B cell (primary cell): ENCODE measurements at regions of chr16 and their contacts with region 1.

Region 1: GRCh38 chr16:46607529-46607928 is 13.7 kb downstream of the SHCBP1 start:
- DNase-seq: peak; percentile 58
- ATAC-seq: peak; percentile 36
- H3K4me3 ChIP-seq: no peak overlapping the region
- H3K4me3 Mint-ChIP-seq: no peak overlapping the region
- H3K27ac ChIP-seq: no peak overlapping the region
- H3K27ac Mint-ChIP-seq: no peak overlapping the region
- H3K4me1 ChIP-seq: peaks cover 9% of the 10 kb centered on the region in 2 donors
- H3K4me1 Mint-ChIP-seq: no peaks in the 10 kb centered on the region
- H3K27me3 ChIP-seq: no peaks in the 10 kb centered on the region
- H3K27me3 Mint-ChIP-seq: no peaks in the 10 kb centered on the region
- CTCF ChIP-seq: peak; percentile 76

Region 2: DNA sequence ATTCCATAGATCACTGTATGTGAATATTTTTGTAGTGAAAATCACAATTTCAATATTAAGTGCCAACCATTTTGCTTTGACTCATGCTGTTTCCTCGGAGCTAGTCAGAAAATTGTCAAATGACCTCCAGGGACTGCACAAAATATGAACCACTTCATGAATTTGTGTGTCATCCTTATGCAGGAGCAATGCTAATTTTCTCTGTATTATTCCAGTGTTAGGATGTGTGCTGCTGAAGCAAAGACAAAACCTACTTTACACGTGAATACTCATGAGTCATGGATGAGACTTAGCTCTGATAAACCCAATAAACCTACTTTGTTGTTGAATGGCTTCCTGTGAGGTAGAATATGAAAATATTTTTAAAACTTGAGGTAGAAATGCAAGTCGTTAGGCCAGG is 51.6 kb before region 1 on chr16:
- CTCF ChIA-PET with region 1: interaction called, 92 read pairs
- POLR2A ChIA-PET with region 1: no interaction called
- intact Hi-C with region 1: loop called (anchors 1 kb)
- DNase-seq: no peak
- ATAC-seq: no peak
- H3K4me3 ChIP-seq: no peak overlapping the region
- H3K4me3 Mint-ChIP-seq: no peak overlapping the region
- H3K27ac ChIP-seq: no peak overlapping the region
- H3K27ac Mint-ChIP-seq: no peak overlapping the region
- H3K4me1 ChIP-seq: no peaks in the 10 kb centered on the region
- H3K4me1 Mint-ChIP-seq: peaks cover 2% of the 10 kb centered on the region
- H3K27me3 ChIP-seq: no peaks in the 10 kb centered on the region
- H3K27me3 Mint-ChIP-seq: peaks cover 20% of the 10 kb centered on the region
- CTCF ChIP-seq: no peak

Region 3: GRCh38 chr16:46591257-46591656 is 16.3 kb before region 1 on chr16:
- CTCF ChIA-PET with region 1: interaction called, 14 read pairs
- POLR2A ChIA-PET with region 1: no interaction called
- intact Hi-C with region 1: no loop called
- DNase-seq: no peak
- ATAC-seq: no peak
- H3K4me3 ChIP-seq: no peak overlapping the region
- H3K4me3 Mint-ChIP-seq: no peak overlapping the region
- H3K27ac ChIP-seq: no peak overlapping the region
- H3K27ac Mint-ChIP-seq: no peak overlapping the region
- H3K4me1 ChIP-seq: no peaks in the 10 kb centered on the region
- H3K4me1 Mint-ChIP-seq: no peaks in the 10 kb centered on the region
- H3K27me3 ChIP-seq: no peaks in the 10 kb centered on the region
- H3K27me3 Mint-ChIP-seq: no peaks in the 10 kb centered on the region
- CTCF ChIP-seq: no peak

Region 4: GRCh38 chr16:46853713-46854443 is 246.3 kb after region 1 on chr16:
- CTCF ChIA-PET with region 1: no interaction called
- POLR2A ChIA-PET with region 1: no interaction called
- intact Hi-C with region 1: no loop called
- DNase-seq: peak; percentile 74
- ATAC-seq: peak; percentile 69
- H3K4me3 ChIP-seq: no peak overlapping the region
- H3K4me3 Mint-ChIP-seq: no peak overlapping the region
- H3K27ac ChIP-seq: no peak overlapping the region
- H3K27ac Mint-ChIP-seq: peak overlapping the region; percentile 7
- H3K4me1 ChIP-seq: peaks cover 6 to 18% of the 10 kb centered on the region in 2 donors
- H3K4me1 Mint-ChIP-seq: peaks cover 17% of the 10 kb centered on the region
- H3K27me3 ChIP-seq: no peaks in the 10 kb centered on the region
- H3K27me3 Mint-ChIP-seq: no peaks in the 10 kb centered on the region
- CTCF ChIP-seq: peak; percentile 80